HEK293 (cell line): ENCODE measurements at regions of chr11 and their contacts with region 1.

Region 1: GRCh38 chr11:33996498-33997454 is 54.8 kb upstream of the CAPRIN1 start:
- H3K4me3 ChIP-seq: no peak overlapping the region
- H3K27ac ChIP-seq: no peak overlapping the region
- H3K4me1 ChIP-seq: no peaks in the 10 kb centered on the region
- CTCF ChIP-seq: peak; percentile 52; the same call in 1 of the 2 replicates

Region 2: GRCh38 chr11:33930317-33931021 is 66.3 kb before region 1 on chr11:
- CTCF ChIA-PET with region 1: no interaction called
- POLR2A ChIA-PET with region 1: no interaction called
- H3K4me3 ChIP-seq: no peak overlapping the region
- H3K27ac ChIP-seq: no peak overlapping the region
- H3K4me1 ChIP-seq: no peaks in the 10 kb centered on the region
- CTCF ChIP-seq: no peak

Region 3: DNA sequence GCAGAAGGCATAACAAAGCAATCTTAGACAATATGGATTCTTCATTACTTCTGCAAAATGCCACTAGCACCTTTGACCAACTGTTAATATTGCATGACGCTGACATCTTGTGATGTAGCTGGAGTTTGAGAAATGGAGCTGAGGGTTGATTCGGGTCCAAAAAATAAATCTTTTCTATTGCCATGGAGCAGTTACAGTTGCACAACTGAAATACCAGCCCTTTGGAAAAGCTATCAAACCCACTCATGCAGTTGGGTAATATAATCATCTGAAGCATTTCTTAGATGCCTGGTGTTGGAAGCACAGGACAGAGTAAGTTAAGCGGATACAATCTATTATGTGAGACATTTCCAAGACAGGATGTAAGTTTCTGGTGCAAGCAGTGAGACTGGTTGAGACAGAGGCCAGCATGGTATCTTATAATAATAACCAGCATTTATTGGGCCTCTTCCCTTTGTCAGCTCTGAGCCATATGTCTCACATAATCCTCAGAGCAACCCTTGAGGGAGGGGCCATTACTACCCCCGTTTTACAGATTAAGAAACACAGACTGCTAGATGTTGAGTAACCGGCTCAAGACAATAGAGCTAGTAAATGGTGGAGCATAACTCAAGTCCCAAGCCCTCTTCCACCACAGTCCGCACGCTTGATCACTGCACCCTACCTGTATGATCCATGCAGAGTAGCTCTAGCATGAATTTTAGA is 20.1 kb before region 1 on chr11:
- CTCF ChIA-PET with region 1: interaction called, 13 read pairs
- POLR2A ChIA-PET with region 1: no interaction called
- H3K4me3 ChIP-seq: no peak overlapping the region
- H3K27ac ChIP-seq: no peak overlapping the region
- H3K4me1 ChIP-seq: no peaks in the 10 kb centered on the region
- CTCF ChIP-seq: no peak

Region 4: GRCh38 chr11:34006876-34007275 is 10.1 kb after region 1 on chr11:
- CTCF ChIA-PET with region 1: interaction called, 17 read pairs
- POLR2A ChIA-PET with region 1: no interaction called
- H3K4me3 ChIP-seq: no peak overlapping the region
- H3K27ac ChIP-seq: no peak overlapping the region
- H3K4me1 ChIP-seq: no peaks in the 10 kb centered on the region
- CTCF ChIP-seq: no peak

Region 5: DNA sequence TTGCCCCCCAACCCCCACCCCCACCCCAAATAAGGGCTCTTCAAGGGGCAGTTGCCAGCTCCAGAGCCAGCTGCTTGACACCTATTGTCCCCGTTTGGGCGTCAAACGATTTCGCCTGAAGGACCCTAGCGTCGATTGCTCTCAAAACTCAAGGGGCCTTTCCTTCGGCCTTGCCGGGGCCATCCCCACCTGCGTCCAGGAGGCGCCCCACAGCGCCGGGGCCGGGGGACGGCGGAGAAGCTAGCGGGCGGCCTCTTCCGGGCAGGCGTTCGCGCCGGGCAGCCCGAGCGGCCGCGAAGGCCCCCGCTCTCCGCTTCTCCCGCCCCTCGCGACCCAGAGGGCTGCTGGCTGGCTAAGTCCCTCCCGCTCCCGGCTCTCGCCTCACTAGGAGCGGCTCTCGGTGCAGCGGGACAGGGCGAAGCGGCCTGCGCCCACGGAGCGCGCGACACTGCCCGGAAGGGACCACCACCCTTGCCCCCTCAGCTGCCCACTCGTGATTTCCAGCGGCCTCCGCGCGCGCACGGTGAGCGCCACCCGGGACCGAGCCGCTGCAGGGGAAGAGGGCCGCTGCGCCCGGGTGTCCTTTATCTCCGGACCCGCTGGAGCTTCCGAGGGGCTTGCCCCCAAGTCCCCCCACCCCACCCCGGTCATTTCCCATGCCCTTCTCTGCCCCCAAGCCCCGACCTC is 54.7 kb after region 1 on chr11 and contains the start of gene CAPRIN1:
- CTCF ChIA-PET with region 1: interaction called, 18 read pairs
- POLR2A ChIA-PET with region 1: interaction called, 3 read pairs
- H3K4me3 ChIP-seq: peak within 1 kb of the TSS; percentile 98
- H3K27ac ChIP-seq: peak within 1 kb of the TSS; percentile 97
- H3K4me1 ChIP-seq: peaks cover 12% of the 10 kb centered on the region
- CTCF ChIP-seq: no peak

Region 6: GRCh38 chr11:34075178-34075820 is 78.5 kb after region 1 on chr11:
- CTCF ChIA-PET with region 1: interaction called, 12 read pairs
- POLR2A ChIA-PET with region 1: no interaction called
- H3K4me3 ChIP-seq: no peak overlapping the region
- H3K27ac ChIP-seq: 0 out of 2 replicates have a peak overlapping the region, but pooled peaks have one; percentile 39
- H3K4me1 ChIP-seq: no peaks in the 10 kb centered on the region
- CTCF ChIP-seq: no peak